Aorta (tissue), 5 donors: ENCODE measurements at regions of chr9 and their contacts with region 1.

Region 1: GRCh38 chr9:136949817-136950655 is 2.0 kb upstream of the LCN12 start:
- DNase-seq: peak; percentile 96 to 98
- ATAC-seq: peak; percentile 90
- H3K4me3 ChIP-seq: peak overlapping the region; percentile 21 to 41
- H3K27ac ChIP-seq: peak overlapping the region in 1 of 2 donors; percentile 41
- H3K4me1 ChIP-seq: no peaks in the 10 kb centered on the region
- H3K27me3 ChIP-seq: no peaks in the 10 kb centered on the region

Region 2: GRCh38 chr9:136991993-136992818 is 42.2 kb after region 1 on chr9 and contains the start of gene PAXX:
- intact Hi-C with region 1: loop called (anchors 2 to 5 kb)
- DNase-seq: peak; percentile 96 to 98
- ATAC-seq: peak; percentile 94
- H3K4me3 ChIP-seq: peak within 1 kb of the TSS; percentile 65 to 85
- H3K27ac ChIP-seq: no peak within 1 kb of the TSS
- H3K4me1 ChIP-seq: peaks cover 0 to 4% of the 10 kb centered on the region in 2 donors
- H3K27me3 ChIP-seq: no peaks in the 10 kb centered on the region
- total RNA-seq, gene PAXX: 27.8 to 42.0 TPM

Region 3: DNA sequence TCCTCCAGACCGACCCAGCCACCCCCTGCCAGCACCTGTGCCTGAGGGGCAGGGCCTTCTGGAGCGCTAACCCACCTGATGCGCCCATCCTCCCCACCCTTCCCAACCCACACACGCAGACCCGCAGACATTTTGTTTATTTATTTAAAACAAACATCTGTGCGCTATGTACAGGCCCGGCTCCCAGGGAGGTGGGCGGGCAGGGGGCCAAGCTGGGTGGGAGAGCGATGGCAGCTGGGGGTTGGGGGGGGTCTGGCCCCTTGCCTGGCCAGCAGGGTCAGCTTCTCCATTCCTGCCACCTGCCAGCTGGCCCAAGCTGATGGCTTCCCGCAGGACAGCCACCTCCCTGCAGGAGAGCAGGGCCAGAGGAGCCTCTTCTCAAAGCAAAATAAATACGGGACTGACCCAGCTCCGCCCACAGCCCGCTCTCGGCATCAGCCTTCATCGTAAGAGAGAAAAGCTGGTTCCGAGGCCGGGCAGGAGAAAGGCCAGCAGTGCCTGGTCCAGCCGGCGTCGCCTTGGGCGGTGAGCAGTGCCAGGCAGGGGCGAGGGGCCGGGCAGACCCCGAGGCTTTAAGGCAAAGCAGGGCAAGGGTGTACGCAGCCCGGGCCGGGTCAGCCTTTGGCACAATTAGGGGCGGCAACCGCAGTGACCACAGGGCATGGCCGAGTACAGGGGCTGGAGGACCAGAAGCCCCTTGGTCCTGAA is 57.2 kb after region 1 on chr9:
- intact Hi-C with region 1: no loop called
- DNase-seq: no peak
- ATAC-seq: no peak
- H3K4me3 ChIP-seq: no peak overlapping the region
- H3K27ac ChIP-seq: no peak overlapping the region
- H3K4me1 ChIP-seq: no peaks in the 10 kb centered on the region
- H3K27me3 ChIP-seq: no peaks in the 10 kb centered on the region

Region 4: DNA sequence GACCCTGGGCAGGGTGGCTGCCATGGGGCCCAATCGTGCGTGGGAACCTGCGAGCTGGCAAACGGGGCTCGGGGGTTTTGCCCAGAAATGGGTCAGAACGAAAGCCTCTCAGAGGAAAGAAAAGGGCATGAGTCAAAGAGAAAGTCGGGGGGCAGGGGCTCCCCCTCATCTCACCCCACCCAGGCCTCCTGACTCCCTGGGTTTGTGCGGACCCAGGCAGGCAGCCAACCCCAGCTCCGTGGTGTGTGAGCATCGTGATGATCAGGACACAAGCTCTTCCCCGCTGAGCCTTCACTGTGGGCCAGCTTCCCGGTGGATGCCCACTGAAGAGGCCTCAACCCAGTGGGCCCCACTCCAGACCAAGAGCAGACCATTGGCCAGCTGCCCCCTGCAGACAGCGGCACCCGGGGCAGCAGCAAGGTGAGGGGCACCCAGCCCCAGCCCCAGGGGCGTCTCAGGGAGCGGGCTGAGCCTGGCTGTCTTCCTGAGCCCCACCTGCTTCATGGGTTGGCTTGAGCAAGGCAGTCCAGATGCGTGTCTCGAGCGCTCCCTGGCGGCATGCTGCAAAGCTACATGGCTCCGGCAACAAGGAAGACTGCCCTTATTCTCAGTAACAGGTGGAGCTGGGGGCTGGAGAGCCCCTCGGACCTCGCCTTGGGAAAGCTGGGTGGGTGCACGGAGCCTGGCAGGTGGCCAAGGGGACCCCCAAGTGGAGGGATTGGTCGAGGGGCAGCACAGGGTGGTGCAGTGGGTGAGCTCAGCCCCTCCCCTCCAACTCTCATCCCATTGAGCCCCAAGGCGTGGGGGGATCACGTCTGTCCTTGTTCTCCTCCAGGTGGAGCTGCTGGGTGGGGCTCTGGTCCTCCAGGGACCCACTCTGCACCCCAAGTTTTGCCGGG is 85.1 kb after region 1 on chr9:
- intact Hi-C with region 1: loop called (anchors 5 kb)
- DNase-seq: peak; percentile 89 to 94
- ATAC-seq: peak; percentile 83
- H3K4me3 ChIP-seq: no peak overlapping the region
- H3K27ac ChIP-seq: no peak overlapping the region
- H3K4me1 ChIP-seq: no peaks in the 10 kb centered on the region
- H3K27me3 ChIP-seq: no peaks in the 10 kb centered on the region